Caco-2 (cell line): ENCODE measurements at regions of chr1 and their contacts with region 1.

Region 1: GRCh38 chr1:8077120-8077573 is 51.0 kb upstream of the ERRFI1 start:
- DNase-seq: peak; percentile 45 to 77
- H3K4me3 ChIP-seq: no peak overlapping the region
- H3K4me3 Mint-ChIP-seq: no peak overlapping the region
- H3K27ac Mint-ChIP-seq: peak overlapping the region; percentile 84
- H3K4me1 ChIP-seq: peaks cover 64% of the 10 kb centered on the region
- H3K4me1 Mint-ChIP-seq: peaks cover 53% of the 10 kb centered on the region
- H3K27me3 ChIP-seq: no peaks in the 10 kb centered on the region
- H3K27me3 Mint-ChIP-seq: no peaks in the 10 kb centered on the region
- CTCF ChIP-seq: no peak

Region 2: DNA sequence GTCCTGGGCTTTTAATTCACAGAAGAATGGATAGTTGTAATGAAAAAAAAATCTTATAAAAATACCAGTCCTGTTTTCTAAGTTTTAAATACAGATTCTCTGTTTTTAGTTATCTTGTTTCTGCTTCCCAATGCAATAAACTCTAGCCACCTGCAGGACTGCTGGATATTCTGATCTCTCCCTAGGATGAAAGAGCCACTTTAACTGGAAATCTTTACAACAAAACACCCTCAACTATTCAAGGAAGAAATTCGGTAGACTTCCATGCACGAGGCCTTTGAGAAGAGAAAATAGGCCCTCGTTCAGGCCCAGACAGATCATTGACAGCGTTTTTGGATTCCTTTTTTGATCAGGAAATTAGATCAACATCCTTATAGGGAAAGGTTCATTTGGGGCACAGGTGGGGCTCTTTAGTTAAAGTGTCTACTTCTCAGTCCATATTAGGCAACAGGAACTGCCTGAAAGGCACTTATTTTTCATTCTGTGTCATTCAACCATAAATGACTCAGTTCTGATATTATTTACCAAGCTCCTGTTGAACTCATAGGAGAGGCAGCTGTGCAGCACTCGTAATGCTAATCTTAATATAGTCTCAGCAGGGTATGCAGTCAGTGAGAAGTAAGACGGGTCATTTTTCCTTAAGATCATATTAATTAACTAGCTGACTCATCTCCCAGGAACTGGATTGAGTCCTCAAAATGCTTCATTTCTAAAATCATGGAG is 20.1 kb after region 1 on chr1:
- CTCF ChIA-PET with region 1: no interaction called
- POLR2A ChIA-PET with region 1: no interaction called
- intact Hi-C with region 1: loop called (anchors 2 kb)
- DNase-seq: peak in 1 of 2 experiments; percentile 16
- H3K4me3 ChIP-seq: no peak overlapping the region
- H3K4me3 Mint-ChIP-seq: peak overlapping the region; percentile 34
- H3K27ac Mint-ChIP-seq: peak overlapping the region; percentile 86
- H3K4me1 ChIP-seq: peaks cover 46% of the 10 kb centered on the region
- H3K4me1 Mint-ChIP-seq: peaks cover 38% of the 10 kb centered on the region
- H3K27me3 ChIP-seq: no peaks in the 10 kb centered on the region
- H3K27me3 Mint-ChIP-seq: no peaks in the 10 kb centered on the region
- CTCF ChIP-seq: no peak

Region 3: GRCh38 chr1:8133657-8134430 is 56.7 kb after region 1 on chr1:
- CTCF ChIA-PET with region 1: no interaction called
- POLR2A ChIA-PET with region 1: no interaction called
- intact Hi-C with region 1: no loop called
- DNase-seq: no peak
- H3K4me3 ChIP-seq: no peak overlapping the region
- H3K4me3 Mint-ChIP-seq: no peak overlapping the region
- H3K27ac Mint-ChIP-seq: no peak overlapping the region
- H3K4me1 ChIP-seq: peaks cover 5% of the 10 kb centered on the region; the same call in 1 of the 2 replicates
- H3K4me1 Mint-ChIP-seq: no peaks in the 10 kb centered on the region
- H3K27me3 ChIP-seq: no peaks in the 10 kb centered on the region
- H3K27me3 Mint-ChIP-seq: no peaks in the 10 kb centered on the region
- CTCF ChIP-seq: no peak